ENCODE measurements at regions of chr4 and their contacts with region 1.

Region 1: DNA sequence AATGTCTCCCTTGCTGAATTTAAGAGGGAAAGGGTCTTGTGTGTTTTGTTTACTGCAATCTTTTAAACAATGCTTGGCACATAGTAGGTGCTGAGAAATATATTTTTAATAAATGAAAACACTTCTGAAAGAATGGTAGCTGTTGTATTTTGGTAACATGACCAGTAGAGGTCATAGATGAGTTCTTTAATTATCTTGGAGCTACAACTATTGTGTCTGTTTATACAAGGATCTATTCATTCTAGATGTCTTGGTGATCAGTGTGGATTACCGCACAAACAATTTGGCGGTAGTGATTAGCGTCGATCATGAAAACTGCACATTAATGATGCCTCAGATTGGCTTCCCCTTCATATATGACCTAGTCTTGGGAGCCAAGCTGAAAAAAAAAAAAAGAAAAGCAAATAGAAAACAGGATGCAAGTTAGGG is 21.4 kb upstream of the SCRG1 start:
- DNase-seq: peak; percentile 35
- H3K4me3 ChIP-seq: no peak overlapping the region
- H3K27ac ChIP-seq: no peak overlapping the region
- H3K4me1 ChIP-seq: no peaks in the 10 kb centered on the region
- CTCF ChIP-seq: peak; percentile 83

Region 2: GRCh38 chr4:172750910-172751309 is 669.4 kb before region 1 on chr4:
- CTCF ChIA-PET with region 1: no interaction called
- POLR2A ChIA-PET with region 1: no interaction called
- intact Hi-C with region 1: no loop called
- DNase-seq: no peak
- H3K4me3 ChIP-seq: no peak overlapping the region
- H3K27ac ChIP-seq: no peak overlapping the region
- H3K4me1 ChIP-seq: no peaks in the 10 kb centered on the region
- CTCF ChIP-seq: no peak

Region 3: DNA sequence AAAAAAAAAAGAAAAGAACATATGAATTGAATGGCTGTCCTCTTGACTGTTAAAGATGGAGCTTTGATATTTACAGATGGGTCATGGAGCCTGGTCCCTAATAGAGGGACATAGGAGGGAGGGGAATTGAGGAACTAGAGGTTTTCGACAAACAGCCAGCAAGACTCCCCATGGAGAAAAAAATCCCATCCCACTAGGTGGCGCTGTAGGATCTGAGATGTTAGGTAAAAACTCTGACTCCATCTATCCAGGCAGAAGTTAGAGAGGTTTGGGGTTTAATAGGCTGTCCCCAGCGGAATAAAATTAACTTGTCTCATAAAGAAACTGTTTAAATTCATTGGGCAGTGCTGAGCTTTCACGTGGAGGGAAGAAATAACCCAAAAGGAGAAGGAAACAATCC is 132.0 kb before region 1 on chr4:
- CTCF ChIA-PET with region 1: no interaction called
- POLR2A ChIA-PET with region 1: interaction called, 6 read pairs
- intact Hi-C with region 1: loop called (anchors 1 kb)
- DNase-seq: peak; percentile 77
- H3K4me3 ChIP-seq: no peak overlapping the region
- H3K27ac ChIP-seq: no peak overlapping the region
- H3K4me1 ChIP-seq: no peaks in the 10 kb centered on the region
- CTCF ChIP-seq: peak; percentile 86

Region 4: GRCh38 chr4:173318648-173319211 is 101.6 kb before region 1 on chr4:
- CTCF ChIA-PET with region 1: interaction called, 4 read pairs
- POLR2A ChIA-PET with region 1: interaction called, 3 read pairs
- intact Hi-C with region 1: loop called (anchors 1 kb)
- DNase-seq: peak; percentile 62
- H3K4me3 ChIP-seq: no peak overlapping the region
- H3K27ac ChIP-seq: no peak overlapping the region
- H3K4me1 ChIP-seq: peaks cover 11% of the 10 kb centered on the region
- CTCF ChIP-seq: peak; percentile 72; the same call in 1 of the 2 replicates

Region 5: DNA sequence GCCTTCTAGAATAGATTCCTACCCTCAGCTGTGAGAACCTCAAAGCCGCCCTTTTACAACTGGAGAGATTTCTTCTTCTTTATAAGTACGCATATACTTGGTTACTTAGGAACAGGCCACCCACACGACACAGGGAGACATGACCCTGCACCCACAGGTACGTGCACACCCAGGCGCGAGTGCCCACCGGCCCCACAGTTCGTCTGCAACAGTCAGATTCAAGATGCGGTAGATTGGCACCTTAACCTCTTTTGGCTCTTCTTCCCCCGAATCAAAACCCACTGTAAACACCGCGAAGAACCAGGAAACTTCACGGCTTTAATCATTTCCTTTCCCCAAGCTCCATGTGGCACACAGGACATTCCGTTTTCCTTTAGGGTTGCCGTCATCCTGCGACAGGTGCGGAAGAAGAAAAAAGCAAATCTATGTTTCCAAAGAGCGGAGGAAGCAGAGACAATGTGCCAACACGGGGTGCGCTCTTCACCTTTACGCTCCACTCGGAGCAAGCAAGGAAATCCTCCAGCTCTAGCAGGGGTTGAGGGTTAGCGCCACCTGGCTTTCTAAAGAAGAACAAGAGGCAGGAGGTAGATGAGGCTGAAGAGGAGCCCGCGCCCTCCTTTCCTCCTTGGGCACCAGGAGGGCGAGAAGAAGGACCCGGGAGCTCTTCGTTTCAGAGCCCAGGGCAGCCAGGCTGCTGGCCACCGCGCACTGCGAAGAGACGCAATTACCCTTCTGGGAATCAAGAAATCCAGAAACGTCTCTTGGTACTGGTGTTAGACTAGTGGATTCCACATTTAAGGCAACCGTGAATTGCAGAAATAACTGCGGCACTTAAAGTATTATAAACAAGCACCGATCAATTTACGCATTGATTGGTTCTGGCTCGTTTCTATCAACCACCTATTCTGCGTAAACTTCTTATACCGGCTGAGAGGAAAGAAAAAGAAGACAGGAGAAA is 74.0 kb after region 1 on chr4:
- CTCF ChIA-PET with region 1: no interaction called
- POLR2A ChIA-PET with region 1: no interaction called
- intact Hi-C with region 1: loop called (anchors 2 kb)
- DNase-seq: peak; percentile 77
- H3K4me3 ChIP-seq: peak overlapping the region; percentile 53
- H3K27ac ChIP-seq: no peak overlapping the region
- H3K4me1 ChIP-seq: peaks cover 5% of the 10 kb centered on the region
- CTCF ChIP-seq: peak; percentile 87

Measured in OCI-LY7 (cell line).